ENCODE measurements at regions of chr3 and their contacts with region 1.

Region 1: DNA sequence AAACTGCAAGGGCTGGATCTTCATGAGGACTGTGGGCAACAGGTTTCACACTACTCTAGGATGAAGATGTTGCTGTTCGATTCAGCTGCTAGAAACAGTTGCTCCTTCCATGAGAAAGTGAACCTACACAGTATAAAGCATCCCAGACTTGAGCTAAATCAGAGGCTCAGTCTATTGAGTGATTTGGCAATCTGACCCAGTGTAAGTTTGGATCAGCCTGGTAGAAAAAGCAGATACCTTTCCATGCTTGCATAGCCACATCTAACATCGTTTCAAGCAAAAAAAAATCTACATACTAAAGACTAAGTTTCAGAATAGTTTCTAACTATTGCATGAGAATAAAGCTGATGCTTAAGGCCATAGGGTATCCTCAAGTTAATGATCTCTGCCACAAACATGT is 4.6 kb downstream of the UQCC5 start:
- DNase-seq: no peak
- ATAC-seq: no peak
- H3K4me3 Mint-ChIP-seq: no peak overlapping the region
- H3K27ac Mint-ChIP-seq: peak overlapping the region; percentile 18
- H3K4me1 Mint-ChIP-seq: peaks cover 33% of the 10 kb centered on the region
- H3K27me3 Mint-ChIP-seq: no peaks in the 10 kb centered on the region

Region 2: DNA sequence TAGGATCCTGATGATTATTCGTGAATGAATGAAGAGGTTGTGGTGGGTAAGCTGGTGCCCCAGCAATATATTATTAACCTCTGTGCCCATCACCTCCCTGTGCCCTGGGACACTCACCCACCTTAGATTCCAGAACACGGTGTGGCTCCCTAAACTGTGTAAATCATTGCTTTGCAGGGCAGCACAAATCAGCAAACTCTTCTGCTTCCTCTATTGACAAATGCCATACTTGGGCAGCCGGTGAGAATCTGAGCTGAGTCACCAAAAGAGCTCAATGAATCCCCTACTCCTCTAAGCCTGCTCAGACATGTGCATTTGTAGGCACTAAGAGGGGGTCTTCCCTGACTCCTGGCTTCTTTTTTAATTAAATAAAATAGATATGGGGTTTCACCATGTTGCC is 11.0 kb after region 1 on chr3:
- CTCF ChIA-PET with region 1: interaction called, 15 read pairs
- POLR2A ChIA-PET with region 1: no interaction called
- DNase-seq: no peak
- ATAC-seq: no peak
- H3K4me3 Mint-ChIP-seq: no peak overlapping the region
- H3K27ac Mint-ChIP-seq: no peak overlapping the region
- H3K4me1 Mint-ChIP-seq: peaks cover 8% of the 10 kb centered on the region
- H3K27me3 Mint-ChIP-seq: no peaks in the 10 kb centered on the region

Region 3: DNA sequence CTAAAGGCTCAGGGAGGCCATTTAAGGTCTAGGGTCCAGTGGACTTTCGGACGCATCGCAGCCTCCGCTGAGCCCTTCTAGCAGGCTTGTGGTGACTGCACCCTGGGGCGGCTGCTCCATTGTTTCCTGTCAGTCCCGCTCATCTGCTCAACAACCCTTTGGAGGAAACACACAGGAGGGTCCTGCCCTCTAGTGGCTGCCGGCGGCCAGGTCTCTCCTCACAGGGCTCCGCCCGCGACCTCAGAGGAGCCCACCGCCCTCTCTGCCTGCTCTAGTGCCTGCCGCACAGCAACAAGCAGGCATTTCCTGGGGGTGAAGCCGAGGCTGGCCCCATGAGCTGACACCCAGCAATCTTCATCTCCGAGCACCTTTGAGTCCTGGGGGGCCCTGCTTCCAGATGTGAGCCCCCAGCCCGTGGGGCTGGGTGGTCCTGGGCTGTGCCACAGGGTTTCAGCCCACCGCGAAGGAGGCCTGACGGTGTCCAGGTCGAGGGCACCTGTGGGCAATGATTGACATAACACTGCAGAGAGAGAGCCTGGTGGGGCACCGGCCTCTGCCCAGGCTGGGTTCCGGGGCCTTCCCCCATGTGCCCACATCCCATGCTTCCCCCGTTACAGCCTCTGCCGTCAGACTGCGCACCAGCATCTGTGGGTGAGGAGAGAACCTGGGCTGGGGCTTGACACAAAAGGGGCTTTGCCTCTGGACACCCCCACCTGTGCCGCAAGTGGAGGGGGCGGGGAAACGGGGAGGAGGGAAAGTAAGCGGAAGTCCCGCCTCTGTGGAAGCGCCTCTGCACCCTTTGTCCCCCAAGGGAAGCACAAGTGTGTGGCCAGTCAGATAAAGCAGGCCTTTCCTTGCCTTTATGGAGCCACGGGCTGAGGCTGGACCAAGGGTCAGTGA is 531.9 kb after region 1 on chr3:
- CTCF ChIA-PET with region 1: no interaction called
- POLR2A ChIA-PET with region 1: no interaction called
- DNase-seq: peak; percentile 94
- ATAC-seq: peak; percentile 96
- H3K4me3 Mint-ChIP-seq: peak overlapping the region; percentile 84
- H3K27ac Mint-ChIP-seq: peak overlapping the region; percentile 97
- H3K4me1 Mint-ChIP-seq: peaks cover 27% of the 10 kb centered on the region
- H3K27me3 Mint-ChIP-seq: no peaks in the 10 kb centered on the region